CD4-positive, alpha-beta memory T cell (primary cell): ENCODE measurements at regions of chr1 and their contacts with region 1.

Region 1: DNA sequence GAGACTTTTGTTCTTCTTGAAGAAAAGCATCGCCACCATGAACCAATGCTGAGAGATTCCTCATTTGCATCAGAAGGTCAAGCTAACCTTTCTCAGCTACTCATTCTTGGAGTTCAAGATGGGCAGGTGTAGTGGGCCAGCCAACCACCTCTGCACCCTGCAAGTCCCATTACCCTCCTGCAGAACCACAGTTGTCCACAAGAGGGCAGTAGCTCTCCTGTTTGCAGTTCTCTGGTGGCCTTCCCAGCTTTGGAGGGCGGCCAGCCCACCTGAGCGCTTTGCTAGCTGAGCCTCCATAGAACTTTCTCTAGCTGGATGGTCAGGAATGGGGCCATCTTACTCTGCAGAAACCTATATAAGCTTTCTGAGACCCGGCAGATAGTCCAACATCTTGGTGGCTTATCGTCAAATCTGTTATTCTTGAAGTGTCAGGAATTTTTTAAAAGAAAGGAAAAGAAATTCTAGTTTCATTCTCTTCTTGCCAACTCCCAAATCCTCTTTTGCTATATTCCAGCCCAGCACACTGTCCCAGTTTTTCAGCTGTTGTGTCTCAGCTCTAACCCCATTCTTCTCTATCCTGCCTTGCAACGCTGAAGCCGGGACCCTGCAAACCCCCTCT is 11.0 kb upstream of the LMX1A start:
- DNase-seq: peak; percentile 57 to 70 (median 63)
- H3K4me3 ChIP-seq: no peak overlapping the region
- H3K4me3 Mint-ChIP-seq: no peak overlapping the region
- H3K27ac ChIP-seq: no peak overlapping the region
- H3K27ac Mint-ChIP-seq: no peak overlapping the region
- H3K4me1 ChIP-seq: no peaks in the 10 kb centered on the region
- H3K4me1 Mint-ChIP-seq: peaks cover 0 to 10% (median 2%) of the 10 kb centered on the region in 4 donors
- H3K27me3 ChIP-seq: peaks cover 4% of the 10 kb centered on the region
- H3K27me3 Mint-ChIP-seq: peaks cover 38 to 48% of the 10 kb centered on the region in 2 donors

Region 2: DNA sequence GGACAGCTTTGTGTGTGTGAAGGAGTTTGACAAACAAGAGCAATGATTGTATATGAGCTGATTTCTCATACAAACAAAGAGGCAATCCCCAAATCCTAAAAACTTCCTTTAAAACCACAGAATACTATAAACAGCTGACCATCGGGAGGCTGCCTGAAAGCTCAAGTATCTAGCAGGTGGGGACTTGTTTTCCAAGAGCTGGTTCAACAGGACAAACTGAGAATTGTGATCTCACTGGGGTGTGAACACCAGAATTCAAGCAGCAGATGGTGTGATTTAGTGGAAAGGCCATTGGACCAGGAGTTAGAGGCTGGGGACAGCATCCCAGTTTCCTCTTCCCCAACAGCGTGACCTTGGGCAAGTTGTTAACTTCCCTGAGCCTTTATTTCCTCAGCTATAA is 24.9 kb before region 1 on chr1:
- CTCF ChIA-PET with region 1: interaction called, 39 read pairs
- POLR2A ChIA-PET with region 1: no interaction called
- intact Hi-C with region 1: no loop called
- DNase-seq: no peak
- H3K4me3 ChIP-seq: no peak overlapping the region
- H3K4me3 Mint-ChIP-seq: no peak overlapping the region
- H3K27ac ChIP-seq: no peak overlapping the region
- H3K27ac Mint-ChIP-seq: no peak overlapping the region
- H3K4me1 ChIP-seq: no peaks in the 10 kb centered on the region
- H3K4me1 Mint-ChIP-seq: no peaks in the 10 kb centered on the region
- H3K27me3 ChIP-seq: no peaks in the 10 kb centered on the region
- H3K27me3 Mint-ChIP-seq: peaks cover 39 to 44% of the 10 kb centered on the region in 2 donors

Region 3: DNA sequence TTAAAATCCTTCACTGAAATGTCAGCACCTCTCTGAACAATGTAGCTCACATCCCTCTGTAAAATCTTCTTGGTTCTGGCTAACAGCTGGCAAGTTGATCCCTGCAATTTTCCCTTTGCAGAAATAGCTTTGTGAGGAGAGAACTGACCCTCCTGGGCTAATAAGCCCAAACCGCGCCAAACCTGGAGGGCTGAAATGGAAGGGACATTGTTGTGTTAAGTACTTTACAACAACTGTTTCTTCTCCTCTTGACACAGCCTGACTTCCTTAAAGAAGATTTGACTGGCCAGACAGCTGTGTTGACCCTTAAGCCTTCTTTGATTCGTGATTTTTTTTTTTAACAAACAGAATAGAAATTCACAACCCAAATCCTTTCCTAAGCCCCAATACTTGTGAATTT is 16.6 kb before region 1 on chr1:
- CTCF ChIA-PET with region 1: interaction called, 39 read pairs
- POLR2A ChIA-PET with region 1: no interaction called
- intact Hi-C with region 1: no loop called
- DNase-seq: no peak
- H3K4me3 ChIP-seq: no peak overlapping the region
- H3K4me3 Mint-ChIP-seq: no peak overlapping the region
- H3K27ac ChIP-seq: no peak overlapping the region
- H3K27ac Mint-ChIP-seq: no peak overlapping the region
- H3K4me1 ChIP-seq: no peaks in the 10 kb centered on the region
- H3K4me1 Mint-ChIP-seq: peaks cover 5 to 35% (median 7%) of the 10 kb centered on the region in 4 donors
- H3K27me3 ChIP-seq: peaks cover 17% of the 10 kb centered on the region
- H3K27me3 Mint-ChIP-seq: peaks cover 64 to 69% of the 10 kb centered on the region in 2 donors

Region 4: DNA sequence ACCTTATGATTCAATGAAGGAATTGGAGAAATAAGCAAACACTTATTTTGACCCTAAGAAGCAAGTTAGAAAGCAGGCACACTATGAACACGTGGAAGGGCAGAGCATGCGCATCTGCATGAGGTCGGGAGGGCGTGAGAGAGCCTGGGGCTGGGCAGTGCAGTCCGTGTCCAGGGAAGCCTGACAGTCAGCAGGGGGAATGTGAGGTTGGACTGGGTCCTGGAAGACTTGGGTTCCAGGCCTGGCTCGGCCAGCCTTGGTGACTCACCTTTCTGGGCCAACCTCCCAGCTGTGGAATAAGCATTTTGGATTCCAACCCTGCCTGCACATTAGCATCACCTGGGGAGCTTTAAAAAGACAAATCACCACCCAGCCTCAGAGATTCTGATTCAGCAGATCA is 15.6 kb after region 1 on chr1:
- CTCF ChIA-PET with region 1: interaction called, 74 read pairs
- POLR2A ChIA-PET with region 1: no interaction called
- intact Hi-C with region 1: no loop called
- DNase-seq: no peak
- H3K4me3 ChIP-seq: no peak overlapping the region
- H3K4me3 Mint-ChIP-seq: no peak overlapping the region
- H3K27ac ChIP-seq: no peak overlapping the region
- H3K27ac Mint-ChIP-seq: no peak overlapping the region
- H3K4me1 ChIP-seq: no peaks in the 10 kb centered on the region
- H3K4me1 Mint-ChIP-seq: no peaks in the 10 kb centered on the region
- H3K27me3 ChIP-seq: peaks cover 4% of the 10 kb centered on the region
- H3K27me3 Mint-ChIP-seq: peaks cover 16 to 30% of the 10 kb centered on the region in 2 donors

Region 5: GRCh38 chr1:165560883-165561656 is 193.6 kb after region 1 on chr1:
- CTCF ChIA-PET with region 1: interaction called, 11 read pairs
- POLR2A ChIA-PET with region 1: no interaction called
- intact Hi-C with region 1: no loop called
- DNase-seq: no peak
- H3K4me3 ChIP-seq: no peak overlapping the region
- H3K4me3 Mint-ChIP-seq: no peak overlapping the region
- H3K27ac ChIP-seq: no peak overlapping the region
- H3K27ac Mint-ChIP-seq: no peak overlapping the region
- H3K4me1 ChIP-seq: no peaks in the 10 kb centered on the region
- H3K4me1 Mint-ChIP-seq: peaks cover 0 to 5% (median 0%) of the 10 kb centered on the region in 4 donors
- H3K27me3 ChIP-seq: no peaks in the 10 kb centered on the region
- H3K27me3 Mint-ChIP-seq: peaks cover 18 to 22% of the 10 kb centered on the region in 2 donors

Region 6: DNA sequence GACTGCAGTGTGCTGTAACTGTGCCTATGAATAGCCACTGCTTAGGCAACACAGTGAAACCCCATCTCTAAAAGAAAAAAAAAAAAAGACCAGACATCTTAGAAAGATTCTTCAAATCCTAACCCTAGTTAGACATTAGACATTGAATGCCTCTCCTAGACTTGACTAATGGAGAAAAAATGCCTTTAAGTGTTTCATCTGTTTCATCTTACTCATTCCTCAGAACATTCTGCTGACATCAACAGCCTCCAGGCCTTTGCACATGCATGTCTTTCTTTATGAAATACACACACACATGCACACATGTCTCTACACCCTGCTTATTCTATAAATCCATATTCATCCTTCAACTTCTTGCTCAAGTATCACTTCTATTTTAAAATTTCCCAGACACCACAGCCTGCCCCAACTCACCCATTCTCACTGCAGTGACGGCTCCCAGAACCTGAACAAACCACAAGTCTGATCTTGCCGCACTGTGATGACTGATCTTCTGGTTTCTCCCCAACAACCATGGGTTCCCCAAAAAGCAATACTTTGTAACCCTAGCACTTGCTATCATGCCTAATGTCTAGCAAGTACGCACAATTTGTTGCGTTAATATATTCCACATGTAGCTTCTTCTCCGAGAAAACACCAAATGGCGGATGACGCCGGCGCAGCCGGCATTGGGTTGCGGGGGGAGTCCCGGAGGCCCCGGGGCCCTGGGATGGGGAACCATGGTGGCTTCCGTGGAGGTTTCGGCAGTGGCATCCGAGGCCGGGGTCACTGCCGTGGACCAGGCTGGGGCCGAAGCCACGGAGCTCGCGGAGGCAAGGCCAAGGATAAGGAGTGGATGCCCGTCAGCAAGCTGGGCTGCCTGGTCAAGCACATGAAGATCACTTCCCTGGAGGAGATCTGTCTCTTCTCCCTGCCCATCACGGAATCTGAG is 213.7 kb after region 1 on chr1:
- CTCF ChIA-PET with region 1: interaction called, 14 read pairs
- POLR2A ChIA-PET with region 1: no interaction called
- intact Hi-C with region 1: no loop called
- DNase-seq: no peak
- H3K4me3 ChIP-seq: no peak overlapping the region
- H3K4me3 Mint-ChIP-seq: peak overlapping the region in 1 of 8 donors; percentile 6
- H3K27ac ChIP-seq: no peak overlapping the region
- H3K27ac Mint-ChIP-seq: no peak overlapping the region
- H3K4me1 ChIP-seq: no peaks in the 10 kb centered on the region
- H3K4me1 Mint-ChIP-seq: no peaks in the 10 kb centered on the region
- H3K27me3 ChIP-seq: no peaks in the 10 kb centered on the region
- H3K27me3 Mint-ChIP-seq: peaks cover 9 to 17% of the 10 kb centered on the region in 2 donors